Breast epithelium (tissue), 4 donors: ENCODE measurements at regions of chr18 and their contacts with region 1.

Region 1: GRCh38 chr18:42509702-42510415 is 554.8 kb downstream of the PIK3C3 start:
- DNase-seq: no peak
- H3K4me3 ChIP-seq: no peak overlapping the region
- H3K27ac ChIP-seq: no peak overlapping the region
- H3K4me1 ChIP-seq: no peaks in the 10 kb centered on the region
- H3K27me3 ChIP-seq: no peaks in the 10 kb centered on the region
- CTCF ChIP-seq: no peak
- POLR2A ChIP-seq: no peak

Region 2: DNA sequence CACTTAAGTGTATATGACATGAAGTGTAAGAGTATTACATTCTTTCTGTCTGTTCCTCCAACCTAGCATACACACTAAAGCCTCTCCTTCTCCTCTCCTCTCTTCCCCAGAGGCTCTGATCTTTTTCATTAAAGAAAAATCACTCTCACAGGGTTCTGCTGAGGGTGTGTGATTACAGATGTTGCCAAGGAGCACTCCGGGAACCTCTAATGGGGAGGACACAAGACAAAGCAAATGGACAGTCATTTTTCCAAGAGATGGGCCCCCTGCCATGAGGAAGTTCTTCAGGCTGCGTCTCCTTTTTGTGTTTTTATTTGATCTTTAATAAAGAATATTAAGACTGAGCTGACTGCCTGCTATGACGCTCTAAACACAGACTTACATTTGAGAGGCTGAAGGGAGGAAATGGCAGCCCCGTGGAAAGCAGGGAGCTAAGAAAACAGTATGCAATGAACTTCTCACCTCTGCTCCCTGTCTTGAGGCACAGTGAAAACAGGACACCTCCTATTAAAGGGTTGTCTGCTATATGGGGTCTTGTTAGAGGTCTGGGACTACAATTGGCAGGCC is 23.2 kb after region 1 on chr18:
- intact Hi-C with region 1: no loop called
- DNase-seq: no peak
- H3K4me3 ChIP-seq: no peak overlapping the region
- H3K27ac ChIP-seq: no peak overlapping the region
- H3K4me1 ChIP-seq: no peaks in the 10 kb centered on the region
- H3K27me3 ChIP-seq: no peaks in the 10 kb centered on the region
- CTCF ChIP-seq: no peak
- POLR2A ChIP-seq: no peak

Region 3: GRCh38 chr18:42548493-42548892 is 38.6 kb after region 1 on chr18:
- intact Hi-C with region 1: no loop called
- DNase-seq: no peak
- H3K4me3 ChIP-seq: no peak overlapping the region
- H3K27ac ChIP-seq: no peak overlapping the region
- H3K4me1 ChIP-seq: no peaks in the 10 kb centered on the region
- H3K27me3 ChIP-seq: no peaks in the 10 kb centered on the region
- CTCF ChIP-seq: no peak
- POLR2A ChIP-seq: no peak

Region 4: DNA sequence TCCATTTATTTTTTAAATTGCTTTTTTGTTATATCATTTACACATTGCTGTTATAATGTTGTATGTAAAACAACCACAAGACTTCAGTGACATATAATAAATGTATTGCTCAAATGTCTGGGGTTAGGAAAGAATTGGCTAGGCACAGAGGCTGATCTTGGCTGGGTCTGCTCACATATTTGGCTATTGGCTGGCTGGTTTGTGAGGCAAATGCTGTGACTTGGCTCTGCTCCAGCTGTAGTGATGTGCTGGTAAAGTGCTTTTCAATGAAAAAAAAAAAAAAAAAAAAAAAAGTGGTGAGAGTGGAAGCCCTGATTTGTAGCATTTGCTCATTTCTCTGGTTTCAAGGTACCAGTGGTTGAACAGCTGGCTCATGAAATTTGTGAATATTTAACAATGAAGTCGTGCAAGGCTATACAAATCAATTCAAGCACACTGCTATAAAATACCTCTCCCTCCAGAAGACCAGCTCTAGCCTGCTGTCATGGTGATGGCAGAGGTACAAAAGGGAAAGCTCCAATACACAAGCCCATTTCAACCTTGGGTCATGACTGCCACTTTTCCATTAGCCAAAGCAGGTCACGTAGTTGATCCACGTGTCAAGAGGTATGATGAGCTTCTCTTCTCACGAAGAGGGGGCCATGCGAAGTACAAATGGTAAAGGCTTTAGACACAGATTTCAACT is 649.4 kb after region 1 on chr18:
- intact Hi-C with region 1: loop called (anchors 5 kb)
- DNase-seq: no peak
- H3K4me3 ChIP-seq: no peak overlapping the region
- H3K27ac ChIP-seq: no peak overlapping the region
- H3K4me1 ChIP-seq: no peaks in the 10 kb centered on the region
- H3K27me3 ChIP-seq: no peaks in the 10 kb centered on the region
- CTCF ChIP-seq: no peak
- POLR2A ChIP-seq: no peak

Region 5: DNA sequence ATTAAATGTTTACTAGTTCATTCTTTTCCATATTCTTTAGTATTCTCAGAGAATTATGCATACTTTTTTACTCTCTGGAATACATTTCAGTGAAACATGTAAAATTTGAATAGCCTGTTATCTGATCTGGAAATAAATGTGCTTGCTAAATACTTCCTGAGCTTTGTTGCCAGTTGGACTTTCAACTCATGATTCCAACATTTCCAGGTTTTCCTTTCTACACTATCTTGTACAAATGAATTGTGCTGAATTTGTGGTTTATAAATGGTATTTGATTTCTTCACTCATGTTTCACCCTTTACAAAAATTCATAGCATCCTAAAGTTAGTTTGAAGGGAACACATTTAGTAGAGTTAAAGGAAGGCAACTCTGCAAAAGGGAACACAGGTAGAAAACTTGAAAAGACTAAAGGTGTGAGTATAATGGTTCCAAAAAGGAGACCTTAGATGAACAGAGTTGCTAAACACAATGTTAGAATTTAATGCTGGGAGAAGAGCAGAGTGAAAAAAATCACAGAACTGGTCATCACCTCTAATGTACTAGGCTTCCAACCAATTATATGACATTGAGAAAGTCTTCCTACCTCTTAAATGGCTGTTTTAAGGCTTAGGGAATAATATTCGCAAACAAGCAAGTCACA is 738.9 kb after region 1 on chr18:
- intact Hi-C with region 1: loop called (anchors 5 kb)
- DNase-seq: no peak
- H3K4me3 ChIP-seq: no peak overlapping the region
- H3K27ac ChIP-seq: no peak overlapping the region
- H3K4me1 ChIP-seq: no peaks in the 10 kb centered on the region
- H3K27me3 ChIP-seq: no peaks in the 10 kb centered on the region
- CTCF ChIP-seq: no peak
- POLR2A ChIP-seq: no peak